Activated CD4-positive, alpha-beta T cell treated with anti-CD3 and anti-CD28 coated beads for 36 hours (primary cell): ENCODE measurements at regions of chr2 and their contacts with region 1.

Region 1: GRCh38 chr2:100562732-100563720 is at the start of gene PDCL3:
- DNase-seq: peak; percentile 96
- ATAC-seq: peak; percentile 96
- H3K4me3 Mint-ChIP-seq: peak within 1 kb of the TSS; percentile 85
- H3K27ac Mint-ChIP-seq: peak within 1 kb of the TSS; percentile 97
- H3K4me1 Mint-ChIP-seq: peaks cover 26% of the 10 kb centered on the region
- H3K27me3 Mint-ChIP-seq: no peaks in the 10 kb centered on the region
- total RNA-seq, gene PDCL3: 39.3 to 41.9 TPM

Region 2: DNA sequence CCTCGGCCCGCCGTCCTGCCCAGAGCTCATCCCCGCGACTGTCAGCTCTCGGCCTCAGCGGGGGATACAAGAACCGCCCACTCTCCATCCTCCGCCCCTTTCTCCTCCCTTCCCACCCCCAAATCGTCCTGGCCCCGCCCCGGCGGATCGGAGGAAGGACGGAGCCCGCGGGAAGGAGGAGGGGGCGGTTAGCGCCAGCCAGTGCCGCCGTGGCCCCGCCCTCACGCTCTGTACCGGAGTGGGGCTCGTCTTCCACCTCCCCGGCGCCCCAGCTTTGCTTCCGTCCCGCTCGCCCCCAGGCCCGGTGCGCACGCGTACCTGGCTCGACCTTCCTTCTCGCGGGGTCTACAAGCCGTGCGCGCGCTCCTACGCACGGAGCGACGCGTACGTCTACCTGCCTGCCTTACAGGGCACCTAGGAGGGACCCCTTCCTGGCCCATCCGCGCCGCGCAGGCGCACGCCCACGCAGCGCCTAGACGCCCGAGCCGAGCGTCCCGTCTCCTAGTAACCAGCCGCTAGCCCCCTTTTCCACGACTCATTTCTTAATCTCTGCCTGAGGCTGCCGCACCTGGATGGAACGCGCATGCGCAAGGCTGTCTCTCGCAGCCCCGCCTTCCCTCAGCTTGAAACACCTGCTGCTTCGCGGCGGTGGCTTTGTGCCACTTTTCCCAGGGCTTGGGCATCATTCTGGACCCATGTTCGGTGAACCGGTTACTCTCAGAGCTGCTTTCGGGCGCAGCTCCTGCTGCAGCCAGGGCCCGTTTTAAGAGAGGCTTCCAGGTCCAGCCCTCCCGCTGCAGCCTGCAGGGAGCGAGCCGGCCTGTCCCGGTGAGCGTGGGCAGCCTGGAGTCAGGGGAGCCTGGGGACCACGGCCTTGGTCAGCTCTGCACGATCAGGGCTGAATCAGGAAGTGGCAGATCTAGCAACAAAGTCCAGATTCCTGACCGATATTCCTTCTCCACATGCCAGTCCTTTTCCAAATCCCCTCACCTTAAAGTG is 1421.6 kb before region 1 on chr2 and contains the start of gene C2orf15:
- CTCF ChIA-PET with region 1: no interaction called
- POLR2A ChIA-PET with region 1: no interaction called
- intact Hi-C with region 1: loop called in 1 of 2 experiments (anchors 5 kb)
- DNase-seq: peak; percentile 98
- ATAC-seq: peak; percentile 95
- H3K4me3 Mint-ChIP-seq: peak within 1 kb of the TSS; percentile 94
- H3K27ac Mint-ChIP-seq: peak within 1 kb of the TSS; percentile 86
- H3K4me1 Mint-ChIP-seq: peaks cover 16% of the 10 kb centered on the region
- H3K27me3 Mint-ChIP-seq: no peaks in the 10 kb centered on the region
- total RNA-seq, gene C2orf15: 0.87 to 1.1 TPM

Region 3: GRCh38 chr2:100416935-100417710 is 145.9 kb before region 1 on chr2 and contains the start of gene CHST10:
- CTCF ChIA-PET with region 1: no interaction called
- POLR2A ChIA-PET with region 1: interaction called, 3 read pairs
- intact Hi-C with region 1: loop called (anchors 1 to 5 kb)
- DNase-seq: peak; percentile 76
- ATAC-seq: peak; percentile 97
- H3K4me3 Mint-ChIP-seq: peak within 1 kb of the TSS; percentile 77
- H3K27ac Mint-ChIP-seq: peak within 1 kb of the TSS; percentile 72
- H3K4me1 Mint-ChIP-seq: peaks cover 24% of the 10 kb centered on the region
- H3K27me3 Mint-ChIP-seq: no peaks in the 10 kb centered on the region
- total RNA-seq, gene CHST10: 5.9 to 6.2 TPM

Region 4: DNA sequence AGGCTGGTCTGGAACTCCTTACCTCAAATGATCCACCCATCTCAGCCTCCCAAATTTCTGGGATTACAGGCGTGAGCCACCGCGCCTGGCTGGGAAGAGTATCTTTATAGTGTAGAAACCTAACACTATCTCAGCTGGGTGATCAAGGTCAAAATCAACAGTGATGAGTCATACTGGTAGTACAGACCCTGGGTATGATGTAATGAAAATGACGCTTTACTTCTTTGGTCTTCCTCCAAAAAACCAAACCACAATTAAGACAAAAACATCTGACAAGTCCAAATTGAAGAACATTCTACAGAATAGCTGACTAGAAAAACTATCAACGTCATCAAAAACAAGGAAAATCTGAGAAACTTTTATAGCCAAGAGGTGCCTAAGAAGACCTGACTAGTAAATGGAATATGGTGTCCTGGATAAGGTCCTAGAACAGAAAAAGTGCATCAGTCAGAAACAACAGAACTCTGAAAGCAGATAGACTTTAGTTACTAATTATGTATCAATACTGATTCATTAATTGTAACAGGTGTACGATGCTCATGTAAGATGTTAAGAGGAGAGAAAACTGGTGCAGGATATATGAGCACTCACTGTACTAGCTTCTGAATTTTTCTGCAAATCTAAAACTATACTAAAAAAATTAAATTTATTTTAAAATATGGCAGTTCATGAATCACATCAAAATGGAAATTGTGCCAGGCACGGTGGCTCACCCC is 25.2 kb after region 1 on chr2:
- CTCF ChIA-PET with region 1: interaction called, 4 read pairs
- POLR2A ChIA-PET with region 1: interaction called, 5 read pairs
- intact Hi-C with region 1: loop called (anchors 1 kb)
- DNase-seq: no peak
- ATAC-seq: peak; percentile 91
- H3K4me3 Mint-ChIP-seq: no peak overlapping the region
- H3K27ac Mint-ChIP-seq: peak overlapping the region; percentile 49
- H3K4me1 Mint-ChIP-seq: peaks cover 29% of the 10 kb centered on the region
- H3K27me3 Mint-ChIP-seq: no peaks in the 10 kb centered on the region

Region 5: GRCh38 chr2:101151141-101151858 is 588.3 kb after region 1 on chr2 and contains the start of gene TBC1D8:
- CTCF ChIA-PET with region 1: no interaction called
- POLR2A ChIA-PET with region 1: no interaction called
- intact Hi-C with region 1: loop called in 1 of 2 experiments (anchors 2 kb)
- DNase-seq: peak; percentile 82
- ATAC-seq: peak; percentile 93
- H3K4me3 Mint-ChIP-seq: peak within 1 kb of the TSS; percentile 71
- H3K27ac Mint-ChIP-seq: peak within 1 kb of the TSS; percentile 55
- H3K4me1 Mint-ChIP-seq: peaks cover 24% of the 10 kb centered on the region
- H3K27me3 Mint-ChIP-seq: peaks cover 21% of the 10 kb centered on the region
- total RNA-seq, gene TBC1D8: 3.3 to 3.4 TPM